ENCODE measurements at regions of chr10 and their contacts with region 1.

Region 1: GRCh38 chr10:3785257-3785850 is 345 bp upstream of the KLF6 start:
- DNase-seq: peak; percentile 99
- H3K4me3 ChIP-seq: peak overlapping the region; percentile 84 to 96
- H3K27ac ChIP-seq: peak overlapping the region; percentile 100
- H3K4me1 ChIP-seq: no peaks in the 10 kb centered on the region
- H3K27me3 ChIP-seq: no peaks in the 10 kb centered on the region
- CTCF ChIP-seq: peak in 1 of 4 experiments; percentile 45
- POLR2A ChIP-seq: peak; percentile 99

Region 2: DNA sequence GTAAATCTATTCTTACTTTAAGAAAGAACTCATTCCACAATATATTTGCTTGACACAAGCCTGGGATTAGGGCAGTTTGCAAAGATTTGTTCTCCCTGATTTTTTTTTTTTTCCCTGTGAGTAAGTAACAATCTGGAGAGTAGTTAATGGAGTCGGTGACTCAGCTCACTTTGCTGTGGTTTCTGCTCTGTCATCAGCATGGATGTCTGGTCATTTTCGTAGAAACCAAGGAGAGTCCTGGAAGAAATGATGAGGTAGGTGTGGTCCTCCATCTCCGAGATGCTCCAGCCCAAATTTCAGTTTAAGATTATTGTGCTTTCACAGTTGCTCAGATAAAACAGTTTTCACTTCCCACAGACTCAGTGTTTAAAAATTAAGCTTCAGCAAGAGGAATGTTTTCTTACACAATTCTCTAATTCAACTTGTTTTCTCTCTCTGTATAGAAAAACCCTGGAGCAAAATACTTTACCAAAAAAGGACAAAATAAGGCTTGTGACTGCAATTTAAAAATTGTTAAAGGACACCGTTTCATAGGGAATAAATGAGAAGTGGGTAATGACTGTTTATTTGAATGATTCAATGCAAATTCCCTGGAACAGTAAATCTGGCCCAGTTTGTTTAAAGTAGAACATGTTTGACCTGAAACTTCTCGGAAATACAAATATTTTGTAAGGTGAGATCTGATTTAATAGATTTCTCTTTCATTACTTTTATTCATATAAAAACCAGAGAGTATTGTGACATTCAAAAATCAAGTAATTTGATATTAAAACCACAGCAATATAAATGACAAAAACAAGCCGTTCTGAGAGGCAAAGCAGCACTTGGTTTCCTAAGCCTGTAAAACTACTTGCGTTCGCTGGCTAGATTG is 536.2 kb before region 1 on chr10:
- intact Hi-C with region 1: loop called (anchors 2 kb)
- DNase-seq: no peak
- H3K4me3 ChIP-seq: no peak overlapping the region
- H3K27ac ChIP-seq: peak overlapping the region; percentile 48 to 50
- H3K4me1 ChIP-seq: no peaks in the 10 kb centered on the region
- H3K27me3 ChIP-seq: no peaks in the 10 kb centered on the region
- CTCF ChIP-seq: no peak
- POLR2A ChIP-seq: no peak

Region 3: GRCh38 chr10:3749600-3749999 is 35.8 kb before region 1 on chr10:
- intact Hi-C with region 1: loop called (anchors 5 kb)
- DNase-seq: peak; percentile 51
- H3K4me3 ChIP-seq: no peak overlapping the region
- H3K27ac ChIP-seq: peak overlapping the region; percentile 52 to 65
- H3K4me1 ChIP-seq: no peaks in the 10 kb centered on the region
- H3K27me3 ChIP-seq: no peaks in the 10 kb centered on the region
- CTCF ChIP-seq: no peak
- POLR2A ChIP-seq: no peak

Region 4: GRCh38 chr10:3852147-3852904 is 67.0 kb after region 1 on chr10:
- intact Hi-C with region 1: loop called (anchors 5 kb)
- DNase-seq: peak; percentile 97
- H3K4me3 ChIP-seq: no peak overlapping the region
- H3K27ac ChIP-seq: peak overlapping the region; percentile 78 to 86
- H3K4me1 ChIP-seq: peaks cover 9% of the 10 kb centered on the region
- H3K27me3 ChIP-seq: no peaks in the 10 kb centered on the region
- CTCF ChIP-seq: peak in 1 of 4 experiments; percentile 14
- POLR2A ChIP-seq: peak; percentile 18

Region 5: GRCh38 chr10:4111643-4112042 is 326.3 kb after region 1 on chr10:
- intact Hi-C with region 1: no loop called
- DNase-seq: no peak
- H3K4me3 ChIP-seq: no peak overlapping the region
- H3K27ac ChIP-seq: no peak overlapping the region
- H3K4me1 ChIP-seq: no peaks in the 10 kb centered on the region
- H3K27me3 ChIP-seq: no peaks in the 10 kb centered on the region
- CTCF ChIP-seq: no peak
- POLR2A ChIP-seq: no peak

Region 6: GRCh38 chr10:4195213-4195612 is 409.9 kb after region 1 on chr10:
- intact Hi-C with region 1: loop called (anchors 10 kb)
- DNase-seq: no peak
- H3K4me3 ChIP-seq: no peak overlapping the region
- H3K27ac ChIP-seq: no peak overlapping the region
- H3K4me1 ChIP-seq: no peaks in the 10 kb centered on the region
- H3K27me3 ChIP-seq: no peaks in the 10 kb centered on the region
- CTCF ChIP-seq: no peak
- POLR2A ChIP-seq: no peak

Region 7: DNA sequence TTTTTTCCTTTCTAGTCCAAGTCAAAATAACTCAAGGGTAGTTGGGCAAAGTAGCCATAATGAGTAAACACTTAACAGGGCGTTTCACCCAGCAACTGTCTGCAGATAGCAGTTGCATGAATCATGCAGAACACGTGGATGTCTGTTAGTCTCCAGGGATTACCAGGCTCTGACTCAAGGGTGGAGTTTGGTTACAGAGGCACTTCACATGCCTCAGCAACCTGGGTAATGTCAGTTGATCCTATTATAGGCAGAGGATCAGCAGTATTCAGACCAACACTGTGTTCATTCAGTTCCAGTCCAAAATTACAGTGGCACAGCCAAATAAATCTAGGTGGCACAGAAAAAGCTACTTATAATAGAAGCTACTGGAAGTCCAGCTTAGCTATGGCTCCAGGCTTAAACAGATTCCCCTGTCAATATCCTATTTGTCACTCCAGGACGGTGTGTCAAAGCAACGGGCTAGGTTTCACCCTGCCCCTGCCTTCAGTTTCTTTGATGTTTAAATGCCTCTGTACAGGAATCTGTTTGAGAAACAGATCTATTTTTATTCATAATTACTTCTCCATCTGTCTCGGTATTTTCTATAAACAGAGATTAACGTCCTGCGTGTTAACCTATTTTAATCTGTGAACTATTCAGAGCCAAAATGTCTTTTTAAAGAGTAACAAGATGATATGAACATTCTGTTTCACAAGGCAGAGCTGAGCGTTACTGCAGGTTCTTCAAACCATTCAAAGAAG is 878.0 kb after region 1 on chr10:
- intact Hi-C with region 1: loop called (anchors 2 kb)
- DNase-seq: peak; percentile 91
- H3K4me3 ChIP-seq: no peak overlapping the region
- H3K27ac ChIP-seq: peak overlapping the region; percentile 60 to 73
- H3K4me1 ChIP-seq: peaks cover 18% of the 10 kb centered on the region
- H3K27me3 ChIP-seq: no peaks in the 10 kb centered on the region
- CTCF ChIP-seq: no peak
- POLR2A ChIP-seq: peak; percentile 26

Region 8: GRCh38 chr10:4763960-4764428 is 978.6 kb after region 1 on chr10:
- intact Hi-C with region 1: no loop called
- DNase-seq: no peak
- H3K4me3 ChIP-seq: no peak overlapping the region
- H3K27ac ChIP-seq: no peak overlapping the region
- H3K4me1 ChIP-seq: no peaks in the 10 kb centered on the region
- H3K27me3 ChIP-seq: no peaks in the 10 kb centered on the region
- CTCF ChIP-seq: no peak
- POLR2A ChIP-seq: no peak